ENCODE measurements at regions of chr3 and their contacts with region 1.

Region 1: GRCh38 chr3:124559881-124560574 is 170.2 kb upstream of the UMPS start:
- DNase-seq: peak; percentile 84
- H3K4me3 Mint-ChIP-seq: no peak overlapping the region
- H3K27ac Mint-ChIP-seq: no peak overlapping the region
- H3K4me1 Mint-ChIP-seq: peaks cover 28% of the 10 kb centered on the region
- H3K27me3 Mint-ChIP-seq: peaks cover 41% of the 10 kb centered on the region
- CTCF ChIP-seq: peak; percentile 67

Region 2: GRCh38 chr3:124014366-124014942 is 545.6 kb before region 1 on chr3:
- CTCF ChIA-PET with region 1: no interaction called
- POLR2A ChIA-PET with region 1: no interaction called
- intact Hi-C with region 1: loop called (anchors 10 kb)
- DNase-seq: no peak
- H3K4me3 Mint-ChIP-seq: no peak overlapping the region
- H3K27ac Mint-ChIP-seq: no peak overlapping the region
- H3K4me1 Mint-ChIP-seq: no peaks in the 10 kb centered on the region
- H3K27me3 Mint-ChIP-seq: peaks cover 89% of the 10 kb centered on the region
- CTCF ChIP-seq: no peak

Region 3: GRCh38 chr3:124401843-124402242 is 158.2 kb before region 1 on chr3:
- CTCF ChIA-PET with region 1: no interaction called
- POLR2A ChIA-PET with region 1: no interaction called
- intact Hi-C with region 1: no loop called
- DNase-seq: no peak
- H3K4me3 Mint-ChIP-seq: no peak overlapping the region
- H3K27ac Mint-ChIP-seq: no peak overlapping the region
- H3K4me1 Mint-ChIP-seq: no peaks in the 10 kb centered on the region
- H3K27me3 Mint-ChIP-seq: peaks cover 16% of the 10 kb centered on the region
- CTCF ChIP-seq: no peak

Region 4: GRCh38 chr3:124492811-124493210 is 67.2 kb before region 1 on chr3:
- CTCF ChIA-PET with region 1: interaction called, 76 read pairs
- POLR2A ChIA-PET with region 1: no interaction called
- intact Hi-C with region 1: loop called (anchors 2 kb)
- DNase-seq: peak; percentile 83
- H3K4me3 Mint-ChIP-seq: no peak overlapping the region
- H3K27ac Mint-ChIP-seq: no peak overlapping the region
- H3K4me1 Mint-ChIP-seq: peaks cover 5% of the 10 kb centered on the region
- H3K27me3 Mint-ChIP-seq: peaks cover 20% of the 10 kb centered on the region
- CTCF ChIP-seq: peak; percentile 67

Region 5: DNA sequence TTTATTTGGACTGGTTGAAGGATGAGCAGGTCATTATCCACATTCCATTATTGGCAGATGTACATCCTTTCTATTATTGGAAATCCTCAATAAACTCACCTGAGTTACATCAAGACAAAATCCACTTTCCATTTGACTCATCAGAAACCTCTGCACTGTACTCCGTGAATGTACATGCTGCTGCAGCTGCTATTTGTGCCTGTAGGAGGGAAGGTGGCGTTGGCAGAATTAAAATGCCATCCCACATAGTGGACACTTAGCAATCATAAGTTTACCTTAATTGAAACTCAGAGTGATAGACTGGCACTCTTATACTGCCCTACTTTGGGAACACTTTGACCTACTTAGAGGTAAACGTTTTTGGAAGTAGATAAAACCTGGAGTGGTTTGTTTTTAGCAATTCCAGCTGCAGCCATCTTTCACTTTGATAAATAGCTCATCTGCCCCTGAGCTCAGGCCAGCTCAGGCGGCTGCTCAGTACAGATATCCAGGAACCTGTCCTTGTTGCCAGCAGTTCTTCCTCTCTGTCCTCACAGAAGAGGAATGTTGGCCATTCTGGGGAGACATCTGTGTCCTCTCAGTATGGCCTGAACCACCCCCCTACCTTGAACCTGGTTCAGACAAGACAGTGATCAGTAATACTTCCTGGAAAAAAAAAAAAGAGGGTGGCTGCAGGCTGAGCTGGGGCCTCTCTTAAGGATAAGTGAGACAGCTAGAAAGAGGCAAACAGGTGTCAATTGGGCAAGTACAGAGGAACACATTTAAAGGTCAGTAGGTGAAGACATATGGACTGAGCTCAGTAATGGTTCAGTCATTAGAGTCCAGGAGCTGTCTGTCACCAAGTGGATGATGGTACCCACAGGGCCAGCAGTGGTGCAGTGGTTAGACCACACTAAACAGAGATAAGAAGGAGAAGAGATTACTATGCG is 16.8 kb after region 1 on chr3:
- CTCF ChIA-PET with region 1: interaction called, 14 read pairs
- POLR2A ChIA-PET with region 1: no interaction called
- intact Hi-C with region 1: no loop called
- DNase-seq: no peak
- H3K4me3 Mint-ChIP-seq: no peak overlapping the region
- H3K27ac Mint-ChIP-seq: no peak overlapping the region
- H3K4me1 Mint-ChIP-seq: peaks cover 6% of the 10 kb centered on the region
- H3K27me3 Mint-ChIP-seq: no peaks in the 10 kb centered on the region
- CTCF ChIP-seq: no peak

Region 6: GRCh38 chr3:124599779-124600609 is 40.0 kb after region 1 on chr3:
- CTCF ChIA-PET with region 1: interaction called, 16 read pairs
- POLR2A ChIA-PET with region 1: no interaction called
- intact Hi-C with region 1: no loop called
- DNase-seq: peak; percentile 60
- H3K4me3 Mint-ChIP-seq: no peak overlapping the region
- H3K27ac Mint-ChIP-seq: no peak overlapping the region
- H3K4me1 Mint-ChIP-seq: peaks cover 21% of the 10 kb centered on the region
- H3K27me3 Mint-ChIP-seq: peaks cover 20% of the 10 kb centered on the region
- CTCF ChIP-seq: no peak

Region 7: DNA sequence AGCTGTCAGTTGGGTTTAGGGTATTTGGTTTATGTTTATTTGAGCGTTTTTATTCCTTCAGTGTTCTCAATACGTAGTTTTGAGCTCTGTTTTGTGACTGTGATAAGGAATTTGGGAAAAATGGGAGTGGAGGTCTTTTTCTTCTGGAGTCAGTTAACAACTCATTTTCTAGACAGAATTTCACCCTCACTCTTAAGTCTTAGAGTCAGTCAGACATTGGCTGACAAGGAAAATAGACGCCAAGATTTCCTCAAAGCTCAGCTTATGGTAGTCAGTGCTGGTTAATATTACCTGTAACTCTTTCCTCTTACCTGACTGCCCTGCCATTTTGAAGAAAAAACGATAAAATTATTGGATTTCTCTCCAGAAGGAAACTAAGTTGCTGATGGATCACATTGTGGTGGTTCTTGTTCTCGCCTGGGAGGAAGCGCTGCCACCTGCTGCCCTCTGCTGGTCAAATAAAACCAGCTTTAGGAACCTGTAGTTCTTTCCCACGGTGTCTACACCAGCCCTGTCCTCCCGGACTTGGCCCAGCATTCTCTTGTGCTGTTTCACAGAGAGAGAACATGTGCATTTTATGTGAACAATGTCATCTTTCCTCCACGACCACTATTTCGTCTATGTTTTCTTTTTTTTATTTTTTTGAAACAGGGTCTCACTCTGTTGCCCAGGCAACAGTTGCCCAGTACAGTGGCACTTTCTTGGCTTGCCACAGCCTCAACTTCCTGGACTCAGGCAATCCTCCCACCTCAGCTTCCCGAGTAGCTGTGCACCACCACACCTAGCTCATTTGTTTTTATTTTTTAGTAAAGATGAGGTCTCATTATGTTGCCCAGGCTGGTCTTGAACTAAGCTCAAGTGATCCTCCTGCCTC is 128.8 kb after region 1 on chr3:
- CTCF ChIA-PET with region 1: interaction called, 372 read pairs
- POLR2A ChIA-PET with region 1: interaction called, 10 read pairs
- intact Hi-C with region 1: loop called (anchors 1 kb)
- DNase-seq: peak; percentile 79
- H3K4me3 Mint-ChIP-seq: no peak overlapping the region
- H3K27ac Mint-ChIP-seq: no peak overlapping the region
- H3K4me1 Mint-ChIP-seq: peaks cover 4% of the 10 kb centered on the region
- H3K27me3 Mint-ChIP-seq: no peaks in the 10 kb centered on the region
- CTCF ChIP-seq: peak; percentile 72

Region 8: GRCh38 chr3:124905849-124906248 is 345.8 kb after region 1 on chr3:
- CTCF ChIA-PET with region 1: no interaction called
- POLR2A ChIA-PET with region 1: no interaction called
- intact Hi-C with region 1: loop called (anchors 1 kb)
- DNase-seq: peak; percentile 16
- H3K4me3 Mint-ChIP-seq: no peak overlapping the region
- H3K27ac Mint-ChIP-seq: no peak overlapping the region
- H3K4me1 Mint-ChIP-seq: no peaks in the 10 kb centered on the region
- H3K27me3 Mint-ChIP-seq: peaks cover 31% of the 10 kb centered on the region
- CTCF ChIP-seq: no peak

Region 9: DNA sequence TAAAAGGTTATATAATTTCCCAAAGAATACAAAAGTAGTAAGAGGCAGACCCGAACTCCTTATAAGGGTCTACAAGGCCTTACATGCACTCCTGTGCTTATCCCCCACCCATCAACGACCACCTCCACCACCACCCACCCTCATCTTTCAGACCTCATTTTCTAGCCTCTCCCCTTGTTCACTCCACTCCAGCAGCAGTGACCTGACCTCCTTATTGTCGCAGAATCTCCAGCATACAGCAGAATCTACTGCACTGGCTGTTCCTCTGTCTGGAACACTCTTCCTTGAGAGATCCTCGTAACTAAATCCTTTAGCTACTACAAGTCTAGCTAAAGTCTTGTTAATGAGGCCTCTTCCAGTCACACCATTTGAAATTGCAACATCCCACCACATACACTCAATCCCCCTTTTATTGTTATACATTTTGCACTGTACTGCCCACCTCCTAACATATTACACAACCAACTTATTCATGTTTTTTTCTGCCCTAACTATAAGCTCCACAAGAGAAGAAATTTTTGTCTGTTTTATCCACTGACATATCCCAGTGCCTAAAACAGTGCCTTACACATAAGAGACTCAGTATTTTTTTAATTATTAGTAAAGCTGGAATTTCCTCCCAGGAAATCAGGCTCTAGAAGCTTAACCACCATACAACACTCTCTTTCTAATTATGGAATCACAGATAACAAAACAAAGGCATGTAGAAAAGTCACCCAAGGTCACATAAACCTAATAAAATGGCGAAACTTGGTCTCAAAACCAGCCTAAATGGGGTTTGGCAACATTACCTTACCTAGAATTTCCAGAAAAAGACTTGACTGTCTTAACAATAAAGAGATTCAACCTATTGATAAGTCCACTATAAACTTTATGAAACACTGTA is 774.9 kb after region 1 on chr3:
- CTCF ChIA-PET with region 1: no interaction called
- POLR2A ChIA-PET with region 1: no interaction called
- intact Hi-C with region 1: no loop called
- DNase-seq: no peak
- H3K4me3 Mint-ChIP-seq: no peak overlapping the region
- H3K27ac Mint-ChIP-seq: no peak overlapping the region
- H3K4me1 Mint-ChIP-seq: peaks cover 12% of the 10 kb centered on the region
- H3K27me3 Mint-ChIP-seq: no peaks in the 10 kb centered on the region
- CTCF ChIP-seq: no peak